ENCODE measurements at regions of chr9 and their contacts with region 1.

Region 1: GRCh38 chr9:23790351-23791260 is 35.4 kb downstream of the ELAVL2 start:
- DNase-seq: no peak
- ATAC-seq: no peak
- H3K4me3 ChIP-seq: no peak overlapping the region
- H3K27ac ChIP-seq: no peak overlapping the region
- H3K4me1 ChIP-seq: no peaks in the 10 kb centered on the region
- H3K27me3 ChIP-seq: no peaks in the 10 kb centered on the region
- CTCF ChIP-seq: no peak
- POLR2A ChIP-seq: no peak

Region 2: GRCh38 chr9:23532282-23532681 is 258.3 kb before region 1 on chr9:
- intact Hi-C with region 1: loop called in 1 of 10 experiments (anchors 5 kb)
- DNase-seq: no peak
- ATAC-seq: no peak
- H3K4me3 ChIP-seq: no peak overlapping the region
- H3K27ac ChIP-seq: no peak overlapping the region
- H3K4me1 ChIP-seq: peaks cover 0 to 9% (median 0%) of the 10 kb centered on the region in 12 donors
- H3K27me3 ChIP-seq: no peaks in the 10 kb centered on the region
- CTCF ChIP-seq: no peak
- POLR2A ChIP-seq: no peak

Region 3: DNA sequence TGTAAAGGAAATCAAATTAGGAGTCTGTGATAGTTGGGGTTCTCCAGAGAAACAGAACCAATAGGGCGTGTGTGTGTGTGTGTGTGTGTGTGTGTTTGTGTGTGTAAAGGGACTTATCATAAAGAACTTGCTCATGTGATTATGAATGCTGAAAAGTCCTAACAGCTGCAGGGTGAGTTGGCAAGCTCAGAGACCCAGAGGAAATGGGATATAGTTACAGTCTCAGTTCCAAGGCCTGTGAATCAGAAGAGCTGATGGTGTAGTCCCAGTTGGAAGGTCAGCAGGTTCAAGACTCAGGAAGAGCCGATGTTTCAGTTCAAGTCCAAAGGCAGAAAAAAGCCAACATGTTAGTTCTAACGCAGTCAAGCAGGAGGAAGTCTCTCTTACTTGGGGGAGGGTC is 178.7 kb before region 1 on chr9:
- intact Hi-C with region 1: no loop called
- DNase-seq: no peak
- ATAC-seq: peak in 1 of 4 donors; percentile 20
- H3K4me3 ChIP-seq: no peak overlapping the region
- H3K27ac ChIP-seq: no peak overlapping the region
- H3K4me1 ChIP-seq: peaks cover 0 to 6% (median 0%) of the 10 kb centered on the region in 12 donors
- H3K27me3 ChIP-seq: no peaks in the 10 kb centered on the region
- CTCF ChIP-seq: no peak
- POLR2A ChIP-seq: no peak

Region 4: GRCh38 chr9:23850690-23851629 is 60.4 kb after region 1 on chr9:
- intact Hi-C with region 1: loop called in 1 of 10 experiments (anchors 10 kb)
- DNase-seq: peak in 2 of 5 donors; percentile 23 to 55
- ATAC-seq: peak in 3 of 4 donors; percentile 53 to 74 (median 71)
- H3K4me3 ChIP-seq: peak overlapping the region; percentile 5 to 46 (median 34)
- H3K27ac ChIP-seq: no peak overlapping the region
- H3K4me1 ChIP-seq: peaks cover 0 to 18% (median 2%) of the 10 kb centered on the region in 12 donors
- H3K27me3 ChIP-seq: peaks cover 0 to 59% (median 28%) of the 10 kb centered on the region in 9 donors
- CTCF ChIP-seq: no peak
- POLR2A ChIP-seq: no peak

Region 5: GRCh38 chr9:24118190-24118589 is 327.6 kb after region 1 on chr9:
- intact Hi-C with region 1: no loop called
- DNase-seq: no peak
- ATAC-seq: no peak
- H3K4me3 ChIP-seq: no peak overlapping the region
- H3K27ac ChIP-seq: no peak overlapping the region
- H3K4me1 ChIP-seq: no peaks in the 10 kb centered on the region
- H3K27me3 ChIP-seq: peaks cover 0 to 2% (median 0%) of the 10 kb centered on the region in 9 donors
- CTCF ChIP-seq: no peak
- POLR2A ChIP-seq: no peak

Measured in heart left ventricle (tissue), 16 donors.